Common myeloid progenitor, CD34-positive (primary cell): ENCODE measurements at regions of chr10 and their contacts with region 1.

Region 1: GRCh38 chr10:125060826-125061556 is 99.4 kb downstream of the CTBP2 start:
- DNase-seq: peak; percentile 49 to 66 (median 65)
- H3K4me3 ChIP-seq: no peak overlapping the region
- H3K27ac ChIP-seq: no peak overlapping the region
- H3K4me1 ChIP-seq: peaks cover 10 to 56% (median 51%) of the 10 kb centered on the region in 4 experiments
- H3K27me3 ChIP-seq: no peaks in the 10 kb centered on the region

Region 2: DNA sequence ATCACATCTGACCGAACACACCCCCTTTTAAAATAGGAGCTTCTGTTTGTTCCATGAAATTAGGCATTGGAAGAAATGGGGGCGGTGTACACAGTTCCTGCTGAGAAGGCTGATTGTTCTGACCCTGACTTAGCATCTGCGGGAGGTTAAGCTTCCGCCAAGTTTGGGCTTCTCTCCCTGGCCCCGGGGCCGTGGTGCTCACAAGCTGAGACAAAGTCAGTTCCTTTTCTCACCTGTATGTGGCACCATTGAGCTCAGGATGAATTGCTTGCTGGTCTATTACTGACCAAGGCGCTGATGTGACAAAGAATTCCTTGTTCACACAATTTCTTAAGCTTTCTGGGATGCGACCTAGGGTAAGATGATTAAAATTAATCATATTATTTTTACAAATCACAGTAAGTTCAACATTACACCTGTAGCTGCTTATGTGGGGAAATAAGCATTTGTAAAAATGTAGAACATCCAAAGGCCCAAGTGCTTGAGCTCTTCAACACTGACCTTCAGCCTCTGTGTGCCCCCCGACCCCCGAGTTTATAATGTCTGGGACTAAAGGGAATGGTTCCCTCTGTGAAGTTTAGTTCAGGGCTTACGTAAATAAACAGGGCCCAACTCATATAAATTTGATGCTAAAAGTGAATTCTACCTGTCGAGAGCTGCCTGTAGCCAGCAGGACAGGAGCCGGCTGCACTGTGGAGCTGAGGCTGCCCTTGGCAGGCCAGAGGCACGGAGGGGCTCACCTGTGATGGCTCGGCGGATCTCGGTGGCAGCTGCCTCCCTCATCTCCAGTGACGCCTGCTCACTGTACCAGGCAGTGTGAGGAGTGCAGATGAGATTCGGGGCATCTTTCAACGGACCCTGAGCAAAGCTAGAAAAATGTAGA is 68.3 kb before region 1 on chr10:
- CTCF ChIA-PET with region 1: interaction called, 19 read pairs
- POLR2A ChIA-PET with region 1: no interaction called
- DNase-seq: peak; percentile 36 to 62 (median 55)
- H3K4me3 ChIP-seq: no peak overlapping the region
- H3K27ac ChIP-seq: no peak overlapping the region
- H3K4me1 ChIP-seq: peaks cover 0 to 9% (median 0%) of the 10 kb centered on the region in 4 experiments
- H3K27me3 ChIP-seq: no peaks in the 10 kb centered on the region

Region 3: DNA sequence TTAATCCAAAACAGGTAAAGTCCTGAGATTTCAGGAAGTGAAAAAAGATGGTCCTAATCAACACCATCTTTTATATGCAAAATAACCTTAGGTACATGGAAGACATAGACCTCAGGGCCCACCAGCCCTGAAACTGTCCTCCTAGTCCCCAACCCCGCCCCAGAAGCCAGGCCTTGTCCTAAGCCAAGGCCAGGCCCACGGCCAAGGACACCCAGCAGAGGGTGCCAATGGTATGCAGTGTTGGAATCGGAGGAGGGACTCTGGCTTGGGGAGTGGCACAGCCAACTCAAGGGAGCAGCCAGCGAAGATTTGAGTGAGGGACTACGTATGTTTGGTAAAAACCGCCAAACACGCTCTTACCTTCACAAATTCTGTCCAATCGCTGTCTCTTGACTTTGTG is 22.4 kb before region 1 on chr10:
- CTCF ChIA-PET with region 1: interaction called, 155 read pairs
- POLR2A ChIA-PET with region 1: interaction called, 3 read pairs
- DNase-seq: peak in 1 of 3 donors; percentile 13
- H3K4me3 ChIP-seq: no peak overlapping the region
- H3K27ac ChIP-seq: no peak overlapping the region
- H3K4me1 ChIP-seq: no peaks in the 10 kb centered on the region
- H3K27me3 ChIP-seq: no peaks in the 10 kb centered on the region

Region 4: DNA sequence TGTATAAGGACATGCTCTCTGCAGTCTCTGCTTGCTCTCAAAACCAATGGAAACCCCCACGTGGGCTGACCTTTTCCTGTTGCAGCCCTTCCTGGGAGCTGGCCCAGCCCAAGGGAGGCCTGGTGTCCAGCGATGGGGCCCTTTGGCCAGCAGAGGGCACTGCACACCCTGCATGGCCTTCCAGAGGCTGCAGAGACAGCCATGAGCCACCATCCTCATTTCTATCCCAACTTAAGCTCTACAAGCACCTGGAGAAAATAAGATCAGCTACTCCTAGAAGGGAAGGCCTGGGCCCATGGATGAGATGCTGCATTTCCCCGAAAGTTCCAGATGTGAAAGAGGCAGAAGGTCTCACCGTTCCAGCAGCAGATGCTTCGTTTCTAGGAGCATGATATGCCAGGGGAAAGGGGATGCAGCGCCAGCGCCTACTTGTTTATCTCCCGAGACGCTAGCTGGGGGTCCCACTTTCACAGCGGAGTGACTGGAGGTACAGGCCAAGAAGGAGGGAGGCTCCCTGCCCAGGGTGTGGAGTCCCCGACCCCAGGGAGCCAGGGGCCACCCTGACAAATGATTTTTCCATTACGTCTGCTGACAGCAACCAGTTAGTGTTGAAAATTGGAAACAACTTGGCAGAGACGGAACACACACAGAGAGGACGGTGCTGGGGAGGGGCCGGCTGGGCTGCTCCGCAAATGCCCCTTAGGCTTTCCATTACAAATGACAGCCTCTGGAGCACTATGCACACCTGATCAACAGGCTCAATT is 12.7 kb before region 1 on chr10:
- CTCF ChIA-PET with region 1: interaction called, 155 read pairs
- POLR2A ChIA-PET with region 1: interaction called, 4 read pairs
- DNase-seq: peak; percentile 49 to 72 (median 71)
- H3K4me3 ChIP-seq: no peak overlapping the region
- H3K27ac ChIP-seq: no peak overlapping the region
- H3K4me1 ChIP-seq: peaks cover 0 to 18% (median 11%) of the 10 kb centered on the region in 4 experiments
- H3K27me3 ChIP-seq: no peaks in the 10 kb centered on the region